Psoas muscle (tissue), 8 donors: ENCODE measurements at regions of chr9 and their contacts with region 1.

Region 1: GRCh38 chr9:127503947-127504782 is 52.9 kb downstream of the LRSAM1 start:
- DNase-seq: peak; percentile 85 to 92
- ATAC-seq: peak; percentile 81 to 90 (median 85)
- H3K4me3 ChIP-seq: no peak overlapping the region
- H3K27ac ChIP-seq: no peak overlapping the region
- H3K4me1 ChIP-seq: no peaks in the 10 kb centered on the region
- H3K27me3 ChIP-seq: no peaks in the 10 kb centered on the region
- CTCF ChIP-seq: peak; percentile 82

Region 2: DNA sequence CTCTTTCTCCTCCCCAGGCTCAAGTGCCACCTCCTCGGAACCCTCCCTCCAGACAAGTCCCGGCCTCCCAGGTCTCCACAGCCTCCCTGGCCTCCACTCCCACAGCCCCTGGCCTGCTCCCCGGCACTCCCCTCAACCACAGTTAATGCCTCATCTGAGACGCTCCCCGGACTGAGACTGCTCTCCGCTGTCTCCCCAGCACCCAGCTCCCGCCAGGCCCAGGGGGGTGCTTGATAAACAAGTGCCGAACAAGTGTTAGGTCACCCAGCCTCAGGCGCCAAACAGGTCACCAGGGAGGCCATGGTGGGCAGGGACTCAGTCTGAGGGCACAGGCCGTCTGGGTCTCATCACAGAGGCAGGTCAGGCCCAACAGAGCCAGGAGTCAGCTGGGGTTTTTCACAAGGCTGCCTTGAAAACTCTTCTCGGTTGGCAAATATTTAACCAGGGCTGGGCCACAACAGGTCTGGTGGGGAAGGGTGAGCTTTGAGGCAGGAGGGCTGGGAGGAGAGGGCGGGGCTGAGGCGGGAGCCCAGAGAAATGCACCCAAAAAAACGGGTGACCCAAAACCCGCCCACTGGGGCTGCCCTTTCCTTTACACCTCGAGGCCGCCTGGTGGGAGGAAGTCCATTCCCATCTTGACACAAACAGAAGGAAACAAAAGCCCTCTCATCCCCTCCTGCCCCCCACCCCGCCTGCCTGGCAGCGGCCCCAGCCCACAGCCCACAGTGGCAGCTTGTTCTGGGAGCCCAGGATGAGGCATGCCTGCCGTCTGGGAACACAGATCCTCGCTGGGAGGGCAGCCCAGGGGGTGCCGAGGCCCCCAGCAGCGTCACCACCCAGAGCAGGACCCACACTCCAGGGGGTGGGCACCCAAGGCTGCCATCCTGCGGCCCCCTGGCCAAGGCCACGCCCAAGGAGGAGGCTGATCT is 41.3 kb after region 1 on chr9:
- intact Hi-C with region 1: no loop called
- DNase-seq: peak in 1 of 2 donors; percentile 63
- ATAC-seq: peak in 2 of 4 donors; percentile 4 to 10
- H3K4me3 ChIP-seq: no peak overlapping the region
- H3K27ac ChIP-seq: no peak overlapping the region
- H3K4me1 ChIP-seq: peaks cover 7% of the 10 kb centered on the region
- H3K27me3 ChIP-seq: peaks cover 0 to 3% (median 0%) of the 10 kb centered on the region in 3 donors
- CTCF ChIP-seq: no peak

Region 3: DNA sequence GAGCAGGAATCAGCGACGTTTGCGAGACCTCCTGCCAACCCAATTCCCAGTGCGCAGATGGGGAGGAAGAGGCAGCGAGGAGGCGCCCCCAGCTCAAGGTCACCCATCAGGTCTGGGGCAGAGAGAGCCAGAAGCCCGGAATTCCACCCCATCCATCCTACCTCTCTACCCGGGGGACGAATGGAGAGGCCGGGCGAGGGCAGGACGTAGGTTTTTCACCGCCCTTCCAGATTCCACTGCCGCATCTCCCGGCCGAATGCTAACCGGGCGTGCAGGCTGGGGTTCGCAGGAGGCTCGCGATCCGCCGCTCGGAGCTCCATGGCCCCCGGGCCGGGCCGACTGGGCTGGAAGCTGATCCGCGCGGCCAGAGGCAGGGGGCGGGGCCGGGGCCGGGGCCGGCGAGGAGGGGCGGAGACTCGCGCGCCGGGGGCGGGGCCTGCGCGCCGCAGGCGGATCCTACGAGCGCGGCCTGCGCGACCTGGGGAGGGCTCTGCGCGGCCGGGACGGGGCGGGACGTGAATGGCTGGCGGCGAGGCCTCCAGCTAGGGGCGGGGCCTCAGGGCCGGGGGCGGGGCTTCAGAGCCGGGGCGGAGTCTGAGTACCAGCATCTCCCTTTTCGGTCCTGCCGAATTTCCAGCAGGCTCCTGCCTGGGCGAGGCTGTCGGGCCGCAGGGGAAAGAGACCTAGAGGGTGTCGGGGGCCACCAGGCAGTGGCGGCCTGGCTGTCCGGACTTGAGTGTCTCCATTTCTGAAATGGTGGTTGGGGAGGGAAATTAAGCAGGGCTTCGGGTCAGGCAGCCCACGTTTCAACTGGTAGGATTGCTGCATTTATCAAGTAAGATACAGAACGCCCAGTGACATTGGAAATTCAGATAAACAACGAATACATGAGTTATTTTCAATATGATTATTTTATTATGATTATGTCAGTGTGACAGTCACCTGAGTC is 412.8 kb after region 1 on chr9 and contains the start of gene ST6GALNAC4:
- intact Hi-C with region 1: loop called (anchors 5 kb)
- DNase-seq: peak; percentile 95 to 97
- ATAC-seq: peak; percentile 91 to 92 (median 92)
- H3K4me3 ChIP-seq: peak within 1 kb of the TSS; percentile 73
- H3K27ac ChIP-seq: peak within 1 kb of the TSS; percentile 81
- H3K4me1 ChIP-seq: peaks cover 37% of the 10 kb centered on the region
- H3K27me3 ChIP-seq: no peaks in the 10 kb centered on the region
- CTCF ChIP-seq: no peak
- total RNA-seq, gene ST6GALNAC4: 8.9 to 52.6 (median 27.3) TPM